ENCODE measurements at regions of chr5 and their contacts with region 1.

Region 1: GRCh38 chr5:129904102-129904666 is at the start of gene CHSY3:
- DNase-seq: peak; percentile 52 to 82
- H3K4me3 ChIP-seq: peak within 1 kb of the TSS; percentile 68
- H3K27ac ChIP-seq: no peak within 1 kb of the TSS
- H3K4me1 ChIP-seq: no peaks in the 10 kb centered on the region
- H3K27me3 ChIP-seq: peaks cover 26% of the 10 kb centered on the region
- CTCF ChIP-seq: no peak
- total RNA-seq, gene CHSY3: 0.17 and 0.33 TPM in 2 replicates

Region 2: DNA sequence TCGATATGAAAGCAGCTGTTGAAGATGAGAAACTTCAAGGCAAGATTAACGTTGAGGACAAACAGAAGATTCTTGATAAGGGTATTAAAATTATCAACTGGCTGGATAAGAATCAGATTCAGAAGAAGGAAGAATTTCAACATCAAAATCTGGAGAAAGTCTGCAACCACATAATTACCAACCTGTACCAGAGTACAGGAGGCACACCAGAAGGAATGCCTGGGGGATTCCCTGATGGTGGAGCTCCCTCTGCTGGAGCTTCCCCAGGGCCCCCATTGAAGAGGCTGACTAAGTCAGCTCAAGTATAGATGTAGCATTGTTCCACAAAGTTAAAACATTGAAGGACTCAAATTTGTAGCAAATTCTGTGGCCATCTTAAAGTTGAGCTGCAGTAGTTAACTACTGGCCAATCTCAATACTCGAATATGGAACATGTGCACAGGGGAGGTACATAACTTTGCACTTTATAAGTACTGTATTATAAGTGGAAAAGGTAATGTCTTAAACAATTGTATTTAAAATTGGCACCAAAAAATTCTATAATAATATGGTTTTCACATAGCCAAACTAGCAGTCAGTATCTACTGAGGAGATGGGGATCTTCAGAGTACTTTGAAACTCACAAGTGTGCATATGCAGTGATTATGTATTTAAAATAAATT is 237.6 kb after region 1 on chr5:
- CTCF ChIA-PET with region 1: no interaction called
- POLR2A ChIA-PET with region 1: no interaction called
- intact Hi-C with region 1: loop called (anchors 1 kb)
- DNase-seq: peak in 1 of 2 experiments; percentile 16
- H3K4me3 ChIP-seq: no peak overlapping the region
- H3K27ac ChIP-seq: no peak overlapping the region
- H3K4me1 ChIP-seq: no peaks in the 10 kb centered on the region
- H3K27me3 ChIP-seq: no peaks in the 10 kb centered on the region
- CTCF ChIP-seq: peak; percentile 59

Region 3: DNA sequence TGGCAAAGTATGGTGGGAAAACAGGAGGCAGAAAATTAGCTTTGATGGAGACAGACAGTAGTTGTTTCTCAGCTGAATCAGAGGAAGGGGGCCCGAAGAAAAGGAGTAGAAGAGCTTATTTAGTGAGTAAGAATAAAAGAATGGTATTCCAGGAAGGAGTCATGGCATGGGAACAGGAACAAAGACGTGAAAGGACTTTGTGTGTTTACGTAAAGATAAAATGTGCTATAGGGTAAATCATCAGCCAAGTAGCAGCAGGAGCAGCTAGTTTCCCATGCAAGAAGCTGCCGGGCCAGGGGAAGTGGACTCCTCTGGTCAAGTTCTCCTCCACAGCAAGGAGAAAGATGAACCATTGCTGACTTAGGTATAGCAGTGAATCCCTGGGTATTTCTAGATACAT is 806.4 kb after region 1 on chr5:
- CTCF ChIA-PET with region 1: no interaction called
- POLR2A ChIA-PET with region 1: no interaction called
- intact Hi-C with region 1: loop called (anchors 10 kb)
- DNase-seq: no peak
- H3K4me3 ChIP-seq: no peak overlapping the region
- H3K27ac ChIP-seq: no peak overlapping the region
- H3K4me1 ChIP-seq: no peaks in the 10 kb centered on the region
- H3K27me3 ChIP-seq: no peaks in the 10 kb centered on the region
- CTCF ChIP-seq: no peak

Region 4: DNA sequence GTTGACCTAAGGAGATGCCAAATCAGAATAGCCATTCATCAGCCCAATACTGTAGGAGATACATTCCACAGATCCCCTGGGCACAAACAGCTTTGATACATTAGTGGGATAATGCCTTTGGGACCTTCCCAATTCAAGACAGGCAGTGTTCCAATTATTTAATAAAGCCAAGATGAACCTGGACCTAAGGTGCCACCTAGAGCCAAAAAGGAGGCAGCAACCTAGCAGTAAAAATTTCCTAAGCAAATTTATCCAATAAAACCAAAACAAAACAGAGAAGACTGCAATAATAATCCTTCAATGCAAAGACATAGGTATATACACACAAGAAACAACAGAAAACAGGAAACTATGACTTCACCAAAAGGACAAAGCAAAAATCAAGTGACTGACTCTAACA is 1007.9 kb after region 1 on chr5:
- CTCF ChIA-PET with region 1: no interaction called
- POLR2A ChIA-PET with region 1: no interaction called
- intact Hi-C with region 1: loop called (anchors 5 kb)
- DNase-seq: no peak
- H3K4me3 ChIP-seq: no peak overlapping the region
- H3K27ac ChIP-seq: no peak overlapping the region
- H3K4me1 ChIP-seq: no peaks in the 10 kb centered on the region
- H3K27me3 ChIP-seq: no peaks in the 10 kb centered on the region
- CTCF ChIP-seq: peak; percentile 56

Region 5: GRCh38 chr5:131109540-131110255 is 1205.5 kb after region 1 on chr5:
- CTCF ChIA-PET with region 1: no interaction called
- POLR2A ChIA-PET with region 1: no interaction called
- intact Hi-C with region 1: loop called (anchors 5 kb)
- DNase-seq: peak in 1 of 2 experiments; percentile 11
- H3K4me3 ChIP-seq: no peak overlapping the region
- H3K27ac ChIP-seq: no peak overlapping the region
- H3K4me1 ChIP-seq: no peaks in the 10 kb centered on the region
- H3K27me3 ChIP-seq: no peaks in the 10 kb centered on the region
- CTCF ChIP-seq: peak; percentile 86

Measured in PC-9 (cell line).